ENCODE measurements at regions of chr5 and their contacts with region 1.

Region 1: DNA sequence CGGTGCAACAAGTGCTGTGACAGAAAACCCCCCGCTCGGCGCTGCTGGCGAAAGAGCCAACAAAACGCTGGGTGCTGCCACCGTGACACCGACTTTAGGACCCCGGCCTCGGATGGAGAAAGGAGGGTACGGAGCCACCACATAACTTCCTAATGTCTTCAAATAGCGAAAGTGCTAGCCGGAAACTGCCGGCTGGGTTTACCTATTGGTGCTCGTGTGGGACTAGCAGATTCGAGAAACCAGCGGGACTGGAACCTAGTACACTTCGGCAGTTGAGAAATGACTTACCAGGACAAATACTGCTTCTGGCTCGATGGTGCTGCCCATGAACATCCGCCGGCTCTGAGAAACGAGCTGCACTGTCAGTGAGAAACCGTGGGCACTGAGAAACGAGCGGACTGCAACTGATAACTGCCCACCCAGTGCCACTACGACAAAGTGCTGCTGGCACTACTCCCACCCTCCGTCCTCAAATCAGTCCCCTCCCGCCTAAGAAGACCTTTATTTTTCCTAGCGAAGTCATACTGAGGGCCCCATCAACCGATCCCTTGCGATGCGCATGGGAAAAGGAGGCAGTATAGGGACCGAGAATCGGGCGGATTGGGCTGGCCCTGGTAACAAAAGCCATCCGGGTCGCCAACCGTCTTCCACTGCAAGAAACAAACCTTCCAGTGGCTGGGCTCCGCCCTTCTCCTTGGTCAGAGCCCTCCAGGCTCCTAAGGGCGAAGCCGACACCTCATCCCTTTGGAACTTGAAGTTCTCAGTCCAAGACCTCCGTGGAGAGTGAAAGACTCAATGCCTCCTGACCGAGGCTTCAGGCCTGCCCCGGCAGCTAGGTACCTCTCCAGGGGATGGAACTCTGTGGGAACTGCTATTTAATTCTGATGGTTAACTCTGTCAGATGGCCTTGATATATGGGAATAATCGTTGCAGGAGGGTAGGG is 27.0 kb upstream of the ANXA2R start:
- DNase-seq: peak; percentile 93
- ATAC-seq: peak; percentile 60
- H3K4me3 Mint-ChIP-seq: peak overlapping the region; percentile 99
- H3K27ac Mint-ChIP-seq: peak overlapping the region; percentile 99
- H3K4me1 Mint-ChIP-seq: peaks cover 32% of the 10 kb centered on the region
- H3K27me3 Mint-ChIP-seq: no peaks in the 10 kb centered on the region
- CTCF ChIP-seq: no peak

Region 2: GRCh38 chr5:42994246-42995151 is 72.6 kb before region 1 on chr5:
- CTCF ChIA-PET with region 1: interaction called, 17 read pairs
- POLR2A ChIA-PET with region 1: interaction called, 29 read pairs
- intact Hi-C with region 1: loop called (anchors 2 kb)
- DNase-seq: peak; percentile 94
- ATAC-seq: peak; percentile 70
- H3K4me3 Mint-ChIP-seq: peak overlapping the region; percentile 90
- H3K27ac Mint-ChIP-seq: peak overlapping the region; percentile 99
- H3K4me1 Mint-ChIP-seq: peaks cover 20% of the 10 kb centered on the region
- H3K27me3 Mint-ChIP-seq: no peaks in the 10 kb centered on the region
- CTCF ChIP-seq: peak; percentile 85

Region 3: DNA sequence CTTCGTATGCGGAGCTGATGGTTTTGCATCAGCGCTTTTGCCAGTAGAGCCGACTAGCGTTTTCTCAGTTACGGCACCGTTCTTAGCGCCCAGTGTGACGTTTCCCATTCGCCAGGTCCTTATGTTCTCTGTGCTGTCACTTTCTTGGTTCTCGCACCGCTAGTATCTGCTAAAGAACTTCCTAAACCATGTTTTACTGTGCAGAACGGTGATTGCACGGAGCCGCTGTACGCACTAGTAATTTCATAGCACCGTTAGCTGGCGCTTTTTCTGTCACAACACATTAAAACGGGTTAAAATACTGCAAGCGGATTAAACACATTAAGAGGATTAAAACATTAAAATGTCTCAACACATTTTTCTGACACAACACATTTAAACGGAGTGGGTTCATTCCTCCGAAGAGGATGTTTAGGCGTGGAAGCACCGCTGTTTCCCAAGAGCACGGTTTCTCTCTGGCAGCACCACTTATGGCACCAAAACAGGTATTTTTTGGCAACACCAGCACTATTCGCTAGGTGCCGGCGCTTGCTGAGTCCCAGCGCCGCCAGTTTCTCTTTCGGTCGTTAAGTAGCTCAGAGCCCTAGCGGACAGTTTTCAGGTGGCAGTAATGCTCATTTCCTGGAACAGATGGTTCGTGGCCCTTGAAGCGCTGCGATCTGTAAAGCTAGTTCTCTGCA is 47.3 kb before region 1 on chr5:
- CTCF ChIA-PET with region 1: interaction called, 26 read pairs
- POLR2A ChIA-PET with region 1: interaction called, 33 read pairs
- intact Hi-C with region 1: no loop called
- DNase-seq: peak; percentile 93
- ATAC-seq: peak; percentile 76
- H3K4me3 Mint-ChIP-seq: peak overlapping the region; percentile 96
- H3K27ac Mint-ChIP-seq: peak overlapping the region; percentile 99
- H3K4me1 Mint-ChIP-seq: peaks cover 34% of the 10 kb centered on the region
- H3K27me3 Mint-ChIP-seq: no peaks in the 10 kb centered on the region
- CTCF ChIP-seq: peak; percentile 75

Region 4: DNA sequence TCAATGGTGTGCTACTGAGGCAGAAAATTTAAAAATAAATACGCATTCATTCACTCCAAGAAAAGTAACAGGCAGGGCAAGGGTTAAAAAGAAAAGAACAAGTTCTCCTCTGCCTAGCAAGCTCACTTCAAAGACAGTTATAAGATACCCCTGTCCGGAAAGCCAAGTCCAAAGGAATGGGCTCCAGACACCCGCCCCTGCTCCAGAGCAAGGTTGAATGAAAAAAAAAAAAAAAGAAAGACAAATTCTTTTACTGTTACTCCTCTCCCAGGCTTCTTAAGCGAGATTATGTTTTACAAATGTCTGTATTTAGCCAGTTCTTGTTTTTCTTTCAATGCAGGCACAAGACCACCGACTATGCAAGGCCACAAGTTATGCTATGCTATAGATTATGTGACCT is 17.8 kb before region 1 on chr5:
- CTCF ChIA-PET with region 1: interaction called, 18 read pairs
- POLR2A ChIA-PET with region 1: interaction called, 13 read pairs
- intact Hi-C with region 1: no loop called
- DNase-seq: no peak
- ATAC-seq: no peak
- H3K4me3 Mint-ChIP-seq: no peak overlapping the region
- H3K27ac Mint-ChIP-seq: no peak overlapping the region
- H3K4me1 Mint-ChIP-seq: peaks cover 47% of the 10 kb centered on the region
- H3K27me3 Mint-ChIP-seq: no peaks in the 10 kb centered on the region
- CTCF ChIP-seq: no peak

Region 5: DNA sequence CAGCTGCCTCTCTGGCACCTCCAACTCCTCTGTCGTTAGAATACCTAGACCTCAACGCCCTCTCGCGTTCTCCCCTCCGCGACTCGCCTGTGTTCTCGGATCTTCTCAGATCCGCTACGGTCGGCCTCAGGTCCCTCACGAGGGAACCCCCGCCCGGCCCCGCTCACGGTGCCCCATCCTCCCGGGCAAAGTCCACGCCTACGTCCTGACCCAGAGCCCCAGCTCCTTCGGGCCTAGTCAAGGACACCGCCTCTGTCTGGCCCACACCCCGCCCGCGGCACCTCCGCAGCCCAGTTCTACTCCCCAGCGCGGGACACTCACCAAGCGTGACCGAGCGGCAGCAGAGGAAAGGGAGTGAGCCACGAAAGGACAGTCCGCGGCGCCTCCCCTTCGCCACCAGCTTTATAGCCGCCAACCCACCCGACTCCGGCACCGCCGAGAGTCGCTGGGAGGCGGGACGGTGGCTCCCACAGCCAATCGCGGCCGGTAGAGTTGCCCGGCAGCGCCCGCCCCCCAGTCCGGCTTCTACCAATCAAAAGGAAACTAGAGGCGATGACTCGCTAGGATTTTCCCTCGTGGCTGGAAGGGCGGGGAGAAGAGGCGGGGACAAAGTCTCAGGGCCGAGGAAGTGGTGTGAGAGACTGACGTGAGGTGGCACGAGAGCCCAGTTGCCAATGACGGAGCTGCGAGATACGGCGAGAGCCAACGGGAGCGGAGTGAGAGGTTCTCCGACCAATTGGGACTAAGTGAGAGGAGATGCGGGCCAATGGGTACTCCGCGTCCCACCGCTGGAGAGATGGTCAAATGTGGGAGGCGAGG is 246.2 kb after region 1 on chr5 and contains the start of gene HMGCS1:
- CTCF ChIA-PET with region 1: no interaction called
- POLR2A ChIA-PET with region 1: interaction called, 3 read pairs
- intact Hi-C with region 1: loop called (anchors 5 kb)
- DNase-seq: peak; percentile 99
- ATAC-seq: peak; percentile 90
- H3K4me3 Mint-ChIP-seq: peak within 1 kb of the TSS; percentile 98
- H3K27ac Mint-ChIP-seq: peak within 1 kb of the TSS; percentile 98
- H3K4me1 Mint-ChIP-seq: peaks cover 62% of the 10 kb centered on the region
- H3K27me3 Mint-ChIP-seq: no peaks in the 10 kb centered on the region
- CTCF ChIP-seq: no peak
- total RNA-seq, gene HMGCS1: 63.6 to 65.7 TPM